ENCODE measurements at regions of chr12 and their contacts with region 1.

Region 1: DNA sequence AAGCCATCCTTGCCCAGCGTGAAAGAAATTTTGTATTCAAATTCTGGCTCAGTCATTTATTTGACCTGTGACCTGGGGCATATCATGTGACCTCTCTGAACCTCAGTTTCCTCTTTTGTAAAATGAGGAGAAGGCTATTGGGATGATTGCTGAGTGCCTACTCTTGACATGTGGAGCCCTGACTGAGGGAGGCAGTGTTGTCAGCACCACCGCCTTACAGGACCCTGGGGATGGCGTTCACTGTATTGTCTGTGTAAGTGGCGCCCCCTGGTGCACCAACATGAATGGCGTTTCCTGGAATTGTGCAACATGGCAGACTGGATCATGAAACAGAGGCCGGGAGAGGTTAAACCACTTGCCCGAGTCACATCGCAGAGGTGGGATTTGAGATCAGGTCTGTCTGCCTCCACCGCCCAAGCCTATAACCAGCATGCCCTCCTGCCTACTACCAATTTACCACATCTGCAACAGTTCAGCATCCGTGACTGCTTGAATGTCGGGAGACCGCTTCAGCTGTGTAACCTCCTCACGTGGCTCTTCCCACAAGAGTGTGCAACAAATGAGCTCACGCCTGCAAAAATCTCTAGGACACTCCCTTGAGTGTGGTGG is 20.1 kb upstream of the CCDC63 start:
- DNase-seq: peak; percentile 39 to 96 (median 84)

Region 2: GRCh38 chr12:110355073-110355472 is 471.6 kb before region 1 on chr12:
- intact Hi-C with region 1: no loop called
- DNase-seq: peak in 1 of 10 donors; percentile 2

Region 3: DNA sequence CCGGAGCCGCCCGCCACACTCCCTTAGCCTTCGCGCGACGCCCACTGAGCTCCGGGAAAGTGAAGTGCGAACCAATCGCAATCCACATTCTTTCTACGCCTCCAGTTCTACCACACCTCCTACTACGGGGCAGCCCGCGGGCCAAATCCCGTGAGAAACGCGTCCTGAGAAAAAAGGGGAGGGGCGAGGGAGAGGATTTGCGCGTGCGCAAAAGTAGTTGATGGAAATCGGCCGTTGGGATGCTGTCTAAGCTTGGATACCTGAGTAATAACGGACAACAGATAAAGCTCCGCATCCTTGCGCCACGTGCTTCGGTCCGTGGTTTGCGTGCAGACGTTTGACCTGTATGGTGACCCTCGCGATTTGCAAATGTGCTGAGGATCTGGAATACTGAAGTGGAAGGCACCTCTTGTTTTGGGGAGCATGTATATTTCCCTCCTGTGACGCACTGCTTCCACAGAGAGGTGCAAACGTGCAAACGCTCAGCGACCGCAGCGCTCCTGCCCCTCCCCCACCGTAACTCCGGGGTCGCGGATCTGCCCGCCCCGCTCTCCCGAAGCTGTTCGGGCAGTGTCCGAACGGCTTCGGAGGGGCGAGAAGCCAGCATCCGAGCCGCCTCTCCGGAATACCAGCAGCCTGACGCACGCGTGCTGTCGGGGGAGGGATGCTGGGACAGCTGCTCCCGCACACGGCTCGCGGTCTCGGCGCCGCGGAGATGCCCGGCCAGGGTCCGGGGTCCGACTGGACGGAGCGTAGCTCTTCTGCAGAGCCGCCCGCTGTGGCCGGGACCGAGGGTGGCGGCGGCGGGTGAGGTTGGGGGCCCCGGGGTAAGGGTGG is 358.3 kb before region 1 on chr12 and contains the starts of genes FAM216A and GPN3:
- intact Hi-C with region 1: loop called (anchors 10 kb)
- DNase-seq: peak; percentile 92 to 99 (median 95)

Region 4: DNA sequence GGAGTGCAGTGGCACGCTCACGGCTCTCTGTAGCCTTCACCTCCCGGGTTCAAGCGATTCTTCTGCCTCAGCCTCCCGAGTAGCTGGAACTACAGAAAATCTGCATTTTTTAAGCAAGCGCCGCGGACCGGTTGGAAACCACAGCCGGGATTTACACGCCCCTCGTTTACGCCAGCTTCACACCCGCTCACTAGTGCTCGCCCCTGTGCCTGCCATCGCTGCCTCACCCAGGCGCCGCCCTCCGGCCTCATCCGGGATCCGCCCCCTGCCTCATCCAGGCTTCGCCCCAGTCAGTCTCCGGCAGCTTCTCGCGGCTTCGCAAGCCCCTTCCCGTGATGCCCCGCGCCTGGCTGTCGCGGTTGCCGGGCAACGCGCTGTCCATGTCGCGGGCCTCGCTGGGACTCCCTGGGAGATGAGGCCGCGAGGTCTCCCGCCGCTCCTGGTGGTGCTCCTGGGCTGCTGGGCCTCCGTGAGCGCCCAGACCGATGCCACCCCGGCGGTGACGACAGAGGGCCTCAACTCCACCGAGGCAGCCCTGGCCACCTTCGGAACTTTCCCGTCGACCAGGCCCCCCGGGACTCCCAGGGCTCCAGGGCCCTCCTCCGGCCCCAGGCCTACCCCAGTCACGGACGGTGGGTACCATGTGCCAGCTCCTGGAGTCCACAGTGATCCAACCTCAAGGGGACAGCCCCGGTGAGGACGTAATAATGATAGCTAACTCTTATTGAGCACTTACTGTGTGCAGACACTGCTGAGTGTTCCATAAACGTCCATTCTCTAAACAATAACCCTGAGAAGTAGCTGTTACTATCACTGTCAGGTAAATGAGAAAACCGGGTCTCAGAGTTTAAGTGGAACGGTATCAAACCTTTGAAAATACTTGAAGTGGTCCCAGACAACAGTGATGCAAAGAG is 212.7 kb before region 1 on chr12 and contains the start of gene TCTN1:
- intact Hi-C with region 1: loop called (anchors 5 kb)
- DNase-seq: peak; percentile 94 to 100 (median 98)

Region 5: GRCh38 chr12:110742718-110743570 is 83.8 kb before region 1 on chr12 and contains the start of gene PPP1CC:
- intact Hi-C with region 1: loop called (anchors 10 kb)
- DNase-seq: peak; percentile 87 to 99 (median 92)

Region 6: GRCh38 chr12:111993292-111994150 is 1166.8 kb after region 1 on chr12:
- intact Hi-C with region 1: no loop called
- DNase-seq: no peak

Measured in posterior cingulate gyrus (tissue), 11 donors.